ENCODE measurements at regions of chr10 and their contacts with region 1.

Region 1: DNA sequence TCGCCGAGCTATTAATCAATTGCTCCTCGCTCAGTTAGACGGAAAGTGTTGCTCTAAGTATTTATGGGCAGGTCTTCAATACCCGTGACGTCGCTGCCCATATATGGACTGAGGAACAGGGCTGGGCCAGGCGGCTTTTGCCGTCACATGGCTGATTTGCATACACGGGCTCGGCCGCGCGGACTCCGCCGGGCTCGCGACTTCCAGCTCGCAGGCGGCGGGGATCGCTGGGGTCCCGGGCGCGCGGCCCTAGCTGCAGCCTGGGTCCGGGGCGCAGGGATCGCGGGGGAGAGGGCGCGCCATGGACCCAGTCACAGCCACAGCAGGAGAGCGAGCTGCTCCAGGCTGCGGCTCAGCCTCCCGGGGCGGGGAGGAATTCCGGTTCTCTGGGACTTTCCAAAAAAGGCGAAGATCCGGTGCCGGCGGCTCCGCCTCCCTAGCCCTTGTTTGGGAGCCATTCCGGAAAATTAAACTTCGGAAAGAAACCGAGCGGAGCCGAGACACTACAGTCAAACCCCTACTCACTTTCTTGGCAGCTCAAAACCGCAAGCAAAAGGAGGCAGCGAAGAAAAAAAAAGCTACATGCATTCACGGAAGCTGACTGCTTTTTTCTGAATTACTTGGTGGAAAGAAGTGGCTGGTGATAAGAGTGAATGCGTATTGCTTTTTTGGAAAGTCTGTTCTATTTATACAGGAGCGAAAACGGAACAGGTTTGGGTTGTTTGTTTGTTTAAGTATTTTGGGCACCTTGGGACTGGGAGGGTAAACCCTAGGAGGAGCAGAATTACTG is at the start of gene EGR2:
- DNase-seq: peak; percentile 89
- ATAC-seq: peak; percentile 84
- H3K4me3 ChIP-seq: peak within 1 kb of the TSS; percentile 59 to 62
- H3K27ac ChIP-seq: peak within 1 kb of the TSS; percentile 75; the same call in 1 of the 2 replicates
- H3K4me1 ChIP-seq: peaks cover 9 to 34% of the 10 kb centered on the region in 2 experiments
- H3K27me3 ChIP-seq: no peaks in the 10 kb centered on the region
- CTCF ChIP-seq: no peak
- POLR2A ChIP-seq: peak; percentile 22
- RAD21 ChIP-seq: no peak
- total RNA-seq, gene EGR2: 2.3 TPM

Region 2: GRCh38 chr10:62437696-62438095 is 378.8 kb before region 1 on chr10:
- CTCF ChIA-PET with region 1: interaction called, 3 read pairs
- POLR2A ChIA-PET with region 1: no interaction called
- RAD21 ChIA-PET with region 1: no interaction called
- intact Hi-C with region 1: loop called (anchors 5 kb)
- DNase-seq: peak; percentile 53
- ATAC-seq: peak; percentile 75
- H3K4me3 ChIP-seq: no peak overlapping the region
- H3K27ac ChIP-seq: no peak overlapping the region
- H3K4me1 ChIP-seq: peaks cover 8 to 13% of the 10 kb centered on the region in 2 experiments; a peak in 3 of 4 replicates
- H3K27me3 ChIP-seq: peaks cover 10% of the 10 kb centered on the region; the same call in 1 of the 2 replicates
- CTCF ChIP-seq: peak; percentile 57 to 90 (median 58)
- POLR2A ChIP-seq: no peak
- RAD21 ChIP-seq: peak; percentile 78

Region 3: DNA sequence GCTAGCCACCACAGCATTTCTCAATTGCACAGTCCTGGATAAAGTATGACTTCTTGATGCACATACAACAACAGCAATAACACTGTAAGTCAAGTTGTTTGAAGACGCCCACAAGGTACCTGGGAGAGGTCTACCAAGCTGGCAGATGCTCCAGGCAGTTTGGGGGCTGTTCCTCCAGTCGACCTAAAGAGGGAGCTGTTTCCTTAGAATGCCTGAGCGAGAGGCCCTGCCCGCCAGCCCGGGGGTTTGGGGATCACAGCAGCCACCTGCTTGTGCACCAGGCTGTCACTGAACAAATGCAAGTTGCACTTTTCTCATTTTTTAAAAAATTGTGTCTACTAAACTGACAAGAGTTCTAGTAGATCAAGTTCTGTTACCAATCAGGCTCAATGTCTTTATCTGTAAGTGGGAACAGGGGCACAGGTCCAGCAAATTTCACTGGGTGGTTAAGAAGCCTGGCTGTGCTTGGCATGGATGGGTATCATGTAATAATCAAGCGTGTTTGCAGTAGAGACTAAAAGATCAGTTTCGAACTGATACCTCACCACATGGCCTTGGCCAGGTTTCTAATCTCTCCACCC is 205.8 kb before region 1 on chr10:
- CTCF ChIA-PET with region 1: interaction called, 71 read pairs
- POLR2A ChIA-PET with region 1: interaction called, 3 read pairs
- RAD21 ChIA-PET with region 1: interaction called, 5 to 8 read pairs
- intact Hi-C with region 1: loop called (anchors 1 kb)
- DNase-seq: peak; percentile 60
- ATAC-seq: peak; percentile 98
- H3K4me3 ChIP-seq: no peak overlapping the region
- H3K27ac ChIP-seq: no peak overlapping the region
- H3K4me1 ChIP-seq: peaks cover 0 to 14% of the 10 kb centered on the region in 2 experiments; a peak in 2 of 4 replicates
- H3K27me3 ChIP-seq: no peaks in the 10 kb centered on the region
- CTCF ChIP-seq: peak; percentile 84 to 99 (median 97)
- POLR2A ChIP-seq: no peak
- RAD21 ChIP-seq: peak; percentile 96

Region 4: GRCh38 chr10:62934258-62934657 is 117.7 kb after region 1 on chr10:
- CTCF ChIA-PET with region 1: no interaction called
- POLR2A ChIA-PET with region 1: no interaction called
- RAD21 ChIA-PET with region 1: no interaction called
- intact Hi-C with region 1: no loop called
- DNase-seq: peak; percentile 15
- ATAC-seq: peak; percentile 82
- H3K4me3 ChIP-seq: no peak overlapping the region
- H3K27ac ChIP-seq: no peak overlapping the region
- H3K4me1 ChIP-seq: peaks cover 0 to 6% of the 10 kb centered on the region in 2 experiments; a peak in 1 of 4 replicates
- H3K27me3 ChIP-seq: no peaks in the 10 kb centered on the region
- CTCF ChIP-seq: no peak
- POLR2A ChIP-seq: no peak
- RAD21 ChIP-seq: no peak

Region 5: GRCh38 chr10:63133056-63133820 is 316.7 kb after region 1 on chr10 and contains the start of gene NRBF2:
- CTCF ChIA-PET with region 1: no interaction called
- POLR2A ChIA-PET with region 1: no interaction called
- RAD21 ChIA-PET with region 1: no interaction called
- intact Hi-C with region 1: loop called (anchors 5 kb)
- DNase-seq: peak; percentile 98
- ATAC-seq: peak; percentile 96
- H3K4me3 ChIP-seq: peak within 1 kb of the TSS; percentile 92 to 96
- H3K27ac ChIP-seq: peak within 1 kb of the TSS; percentile 62
- H3K4me1 ChIP-seq: peaks cover 2 to 19% of the 10 kb centered on the region in 2 experiments; a peak in 3 of 4 replicates
- H3K27me3 ChIP-seq: no peaks in the 10 kb centered on the region
- CTCF ChIP-seq: peak in 2 of 3 experiments; percentile 28 to 32; a peak in 3 of 6 replicates
- POLR2A ChIP-seq: peak; percentile 68
- RAD21 ChIP-seq: 0 out of 2 replicates have a peak, but pooled peaks have one; percentile 2
- total RNA-seq, gene NRBF2: 20.2 TPM

Region 6: DNA sequence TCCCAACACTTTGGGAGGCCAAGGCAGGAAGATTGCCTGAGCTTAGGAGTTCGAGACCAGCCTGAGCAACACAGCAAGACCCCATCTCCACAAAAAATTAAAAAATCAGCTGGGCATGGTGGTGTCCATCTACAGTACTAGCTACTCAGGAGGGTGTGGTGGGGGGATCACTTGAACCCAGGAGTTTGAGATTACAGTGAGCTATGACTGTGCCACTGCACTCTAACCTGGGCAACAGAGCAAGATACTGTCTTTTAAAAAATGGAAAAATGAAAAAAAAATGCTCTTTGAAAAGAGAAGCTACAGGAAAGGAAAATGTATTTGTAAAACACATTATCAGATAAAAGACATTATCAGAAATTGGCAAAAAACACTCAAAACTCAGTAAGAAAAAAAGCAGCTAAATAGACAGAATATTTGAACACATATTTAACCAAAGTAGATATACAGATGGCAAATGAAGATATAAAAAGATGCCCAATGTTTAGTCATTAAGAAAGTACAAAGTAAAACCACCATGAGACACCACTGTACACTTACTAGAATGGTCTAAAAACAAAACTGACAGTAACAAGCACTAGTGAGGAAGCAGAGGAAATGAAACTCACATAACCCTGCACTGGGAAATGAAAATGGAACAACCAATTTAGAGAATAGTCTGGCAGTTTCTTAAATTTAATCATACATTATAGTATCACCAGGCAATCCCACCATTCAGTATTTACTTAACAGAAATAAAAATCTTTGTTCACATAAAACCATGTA is 357.1 kb after region 1 on chr10:
- CTCF ChIA-PET with region 1: no interaction called
- POLR2A ChIA-PET with region 1: no interaction called
- RAD21 ChIA-PET with region 1: no interaction called
- intact Hi-C with region 1: no loop called
- DNase-seq: no peak
- ATAC-seq: no peak
- H3K4me3 ChIP-seq: no peak overlapping the region
- H3K27ac ChIP-seq: no peak overlapping the region
- H3K4me1 ChIP-seq: no peaks in the 10 kb centered on the region
- H3K27me3 ChIP-seq: no peaks in the 10 kb centered on the region
- CTCF ChIP-seq: no peak
- POLR2A ChIP-seq: no peak
- RAD21 ChIP-seq: no peak

Region 7: DNA sequence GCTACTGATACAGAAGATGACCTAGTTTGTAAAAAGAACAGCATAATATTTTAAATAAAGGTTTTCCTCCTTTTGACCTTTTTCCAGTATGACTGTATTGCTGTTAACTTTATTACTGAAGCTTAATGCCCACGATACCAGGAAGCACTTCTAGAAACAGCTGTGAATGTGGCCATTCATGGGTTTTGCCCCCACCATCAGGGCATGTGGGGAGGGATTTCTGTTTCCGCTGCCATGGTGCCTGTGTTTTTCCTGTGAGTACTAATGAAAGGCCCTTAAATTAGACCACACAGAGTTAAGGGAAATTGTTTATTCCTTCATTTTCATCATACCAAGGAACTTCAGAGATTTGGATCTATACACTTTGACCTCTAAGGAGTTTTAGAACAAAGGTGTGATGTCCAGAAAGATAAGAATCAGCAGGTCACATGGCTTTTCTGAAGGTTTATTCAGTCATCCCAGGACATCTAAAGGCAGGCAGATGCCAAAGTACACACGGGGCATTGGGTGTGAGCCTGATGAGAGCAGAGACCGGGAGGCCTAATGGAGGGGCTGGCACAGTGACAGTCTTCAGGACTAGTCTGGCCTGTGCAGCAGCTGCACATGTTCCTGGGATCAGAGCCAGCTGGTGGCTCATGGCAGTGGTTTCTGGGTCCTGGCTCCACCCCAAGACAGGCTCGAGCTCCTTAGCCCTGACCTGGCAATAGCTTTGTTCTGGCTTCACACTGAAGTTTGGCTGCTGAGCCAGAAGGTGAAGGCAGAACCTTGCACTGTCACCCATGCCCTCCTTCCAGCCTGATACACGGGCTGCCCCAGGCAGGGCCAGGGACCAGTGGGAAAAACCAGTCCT is 895.6 kb after region 1 on chr10:
- CTCF ChIA-PET with region 1: no interaction called
- POLR2A ChIA-PET with region 1: no interaction called
- RAD21 ChIA-PET with region 1: no interaction called
- intact Hi-C with region 1: loop called (anchors 5 kb)
- DNase-seq: peak; percentile 99
- ATAC-seq: peak; percentile 91
- H3K4me3 ChIP-seq: 0 out of 4 replicates have a peak overlapping the region, but pooled peaks of 1 of the 2 experiments have one; percentile 5
- H3K27ac ChIP-seq: peak overlapping the region; percentile 75
- H3K4me1 ChIP-seq: peaks cover 59 to 75% of the 10 kb centered on the region in 2 experiments
- H3K27me3 ChIP-seq: no peaks in the 10 kb centered on the region
- CTCF ChIP-seq: no peak
- POLR2A ChIP-seq: no peak
- RAD21 ChIP-seq: peak; percentile 36